Esophagus muscularis mucosa (tissue), 4 donors: ENCODE measurements at regions of chr11 and their contacts with region 1.

Region 1: DNA sequence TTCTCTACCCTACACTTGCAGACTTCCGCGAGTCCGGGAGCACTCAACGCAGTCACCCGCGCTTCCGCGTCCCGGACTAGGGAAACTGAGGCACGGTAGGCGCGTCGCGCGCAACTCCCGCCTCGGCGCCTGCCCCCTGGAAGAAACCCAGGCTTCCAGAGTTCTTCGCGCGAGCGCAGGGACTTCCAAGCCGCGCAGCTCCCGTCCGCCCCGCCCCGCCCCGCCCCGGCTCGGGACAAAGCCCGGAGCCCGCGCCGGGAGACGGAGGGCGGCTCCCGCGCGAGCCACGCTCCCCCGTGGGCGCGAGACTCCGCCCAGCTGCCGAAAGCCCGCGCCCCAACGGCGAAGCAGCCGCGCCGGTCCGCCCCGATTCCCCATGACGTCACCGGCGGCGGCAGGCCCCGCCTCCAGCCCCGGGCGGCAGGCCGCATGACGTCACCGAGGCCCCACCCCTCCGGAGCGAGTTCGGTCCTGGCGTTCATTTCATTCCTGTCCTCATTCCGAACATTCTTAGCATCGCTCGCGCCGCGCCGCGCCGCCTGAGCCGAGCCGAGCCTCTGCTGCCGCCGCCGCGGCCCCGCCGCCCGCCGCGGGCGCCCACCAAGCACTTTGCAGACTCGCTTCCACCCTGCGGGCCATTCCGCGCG is at the start of gene TEAD1:
- DNase-seq: peak; percentile 98
- H3K4me3 ChIP-seq: peak within 1 kb of the TSS; percentile 87 to 92 (median 90)
- H3K27ac ChIP-seq: peak within 1 kb of the TSS; percentile 98 to 100 (median 99)
- H3K4me1 ChIP-seq: peaks cover 21 to 46% (median 36%) of the 10 kb centered on the region in 4 donors
- H3K27me3 ChIP-seq: no peaks in the 10 kb centered on the region
- CTCF ChIP-seq: no peak
- EP300 ChIP-seq: peak; percentile 52
- POLR2A ChIP-seq: peak; percentile 70
- total RNA-seq, gene TEAD1: 147 to 307 (median 232) TPM

Region 2: DNA sequence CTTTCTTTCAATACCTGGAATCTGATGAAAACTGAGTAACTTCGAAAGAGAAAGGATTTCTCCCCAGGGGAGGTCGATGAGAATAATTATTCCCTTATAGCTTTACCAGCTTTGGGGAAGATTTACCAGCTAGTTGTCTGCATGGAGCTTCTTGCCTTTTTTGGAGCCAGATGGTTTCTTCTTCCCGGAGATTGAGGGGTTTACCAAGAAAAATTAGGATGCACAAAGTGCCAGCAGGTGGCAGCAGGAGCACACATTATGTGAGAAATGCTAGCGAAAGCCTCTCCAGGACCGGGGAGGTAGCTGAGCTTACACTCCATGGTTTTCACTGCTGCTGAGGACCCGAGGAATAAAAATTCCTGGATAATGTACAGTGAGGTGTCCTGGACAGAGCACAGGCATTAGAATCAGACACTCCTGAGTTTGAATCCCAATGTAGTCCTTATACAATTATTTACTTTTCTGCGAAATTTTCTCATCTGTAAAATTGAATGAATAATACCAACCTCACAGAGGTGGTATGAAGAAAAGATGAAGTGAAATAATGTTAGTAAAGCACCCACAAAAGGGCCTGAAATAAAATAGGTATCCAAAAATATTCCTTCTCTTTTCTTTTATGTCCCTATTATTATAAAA is 342.7 kb before region 1 on chr11:
- intact Hi-C with region 1: loop called (anchors 10 kb)
- DNase-seq: no peak
- H3K4me3 ChIP-seq: no peak overlapping the region
- H3K27ac ChIP-seq: peak overlapping the region; percentile 44 to 62 (median 54)
- H3K4me1 ChIP-seq: peaks cover 0 to 42% (median 39%) of the 10 kb centered on the region in 4 donors
- H3K27me3 ChIP-seq: no peaks in the 10 kb centered on the region
- CTCF ChIP-seq: peak; percentile 76 to 87 (median 83)
- EP300 ChIP-seq: no peak
- POLR2A ChIP-seq: no peak

Region 3: GRCh38 chr11:12377824-12378593 is 296.0 kb before region 1 on chr11:
- intact Hi-C with region 1: loop called (anchors 5 kb)
- DNase-seq: peak; percentile 92
- H3K4me3 ChIP-seq: peak overlapping the region; percentile 73 to 82 (median 78)
- H3K27ac ChIP-seq: peak overlapping the region; percentile 96 to 100 (median 98)
- H3K4me1 ChIP-seq: peaks cover 36 to 71% (median 67%) of the 10 kb centered on the region in 4 donors
- H3K27me3 ChIP-seq: no peaks in the 10 kb centered on the region
- CTCF ChIP-seq: peak in 2 of 3 experiments; percentile 43 to 53
- EP300 ChIP-seq: peak; percentile 50
- POLR2A ChIP-seq: no peak

Region 4: GRCh38 chr11:12411806-12412727 is 262.0 kb before region 1 on chr11:
- intact Hi-C with region 1: loop called (anchors 10 kb)
- DNase-seq: peak; percentile 92
- H3K4me3 ChIP-seq: no peak overlapping the region
- H3K27ac ChIP-seq: peak overlapping the region; percentile 87 to 100 (median 98)
- H3K4me1 ChIP-seq: peaks cover 77 to 100% (median 99%) of the 10 kb centered on the region in 4 donors
- H3K27me3 ChIP-seq: no peaks in the 10 kb centered on the region
- CTCF ChIP-seq: peak; percentile 73 to 80 (median 80)
- EP300 ChIP-seq: peak; percentile 95
- POLR2A ChIP-seq: no peak

Region 5: DNA sequence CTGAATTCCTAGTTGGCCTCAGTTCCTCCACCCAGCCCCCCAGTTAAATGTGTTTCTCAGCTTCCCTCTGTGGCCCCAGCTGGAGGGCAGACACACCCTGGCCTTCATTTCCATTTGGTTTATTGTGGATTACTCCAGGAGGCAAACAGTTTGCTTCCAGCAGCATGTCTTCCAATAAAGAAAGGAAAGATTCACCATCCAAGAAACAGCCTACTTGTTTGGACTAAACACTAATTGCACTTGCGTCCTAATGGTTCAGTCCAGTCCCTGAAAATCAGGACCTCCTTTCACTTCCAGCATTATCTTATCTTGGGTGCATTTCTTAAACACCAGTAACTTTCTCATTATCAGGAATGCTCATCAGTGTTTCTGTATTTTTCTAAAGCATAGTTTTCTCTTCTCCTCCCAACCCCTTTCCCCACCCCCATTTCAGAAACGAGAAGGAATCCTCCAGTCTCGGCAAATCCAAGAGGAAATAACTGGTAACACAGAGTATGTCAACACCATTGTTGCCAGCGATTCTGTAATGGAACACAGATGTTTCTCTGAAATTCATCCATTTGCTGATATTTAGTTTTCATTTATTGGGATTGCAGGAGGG is 165.8 kb before region 1 on chr11:
- intact Hi-C with region 1: loop called (anchors 10 kb)
- DNase-seq: peak; percentile 75
- H3K4me3 ChIP-seq: no peak overlapping the region
- H3K27ac ChIP-seq: peak overlapping the region; percentile 42 to 55 (median 51)
- H3K4me1 ChIP-seq: peaks cover 7 to 62% (median 44%) of the 10 kb centered on the region in 4 donors
- H3K27me3 ChIP-seq: no peaks in the 10 kb centered on the region
- CTCF ChIP-seq: no peak
- EP300 ChIP-seq: no peak
- POLR2A ChIP-seq: no peak

Region 6: DNA sequence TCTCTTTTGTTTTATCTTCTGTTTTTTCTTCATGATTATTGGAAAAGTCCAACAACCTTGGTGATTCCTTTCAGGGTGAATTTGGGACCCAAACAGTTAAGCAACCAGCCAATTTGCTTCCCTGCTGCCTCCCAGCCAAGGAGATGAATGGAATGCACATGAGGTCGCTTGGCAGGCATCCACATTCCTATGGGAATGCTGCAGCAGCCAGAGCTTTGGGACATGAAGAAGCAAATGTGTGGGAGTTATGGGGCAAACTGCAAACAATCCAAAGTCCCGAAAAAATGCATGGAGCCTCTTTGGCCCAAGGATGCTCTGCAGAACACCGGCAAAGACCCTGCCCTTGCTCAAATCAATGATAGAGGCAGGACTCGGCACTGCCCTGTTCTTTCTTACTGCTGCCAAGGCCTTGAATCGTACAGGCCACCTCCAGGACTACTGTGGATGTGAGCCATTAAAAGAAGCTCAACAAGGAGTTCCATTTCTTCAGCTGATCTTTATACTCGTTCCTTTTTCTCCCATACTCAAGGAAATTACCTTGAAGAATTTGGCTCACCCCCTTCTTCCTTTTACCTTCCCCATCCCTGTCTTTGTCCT is 117.2 kb before region 1 on chr11:
- intact Hi-C with region 1: loop called (anchors 10 kb)
- DNase-seq: peak; percentile 93
- H3K4me3 ChIP-seq: no peak overlapping the region
- H3K27ac ChIP-seq: peak overlapping the region; percentile 69 to 76 (median 76)
- H3K4me1 ChIP-seq: peaks cover 23 to 41% (median 34%) of the 10 kb centered on the region in 4 donors
- H3K27me3 ChIP-seq: no peaks in the 10 kb centered on the region
- CTCF ChIP-seq: no peak
- EP300 ChIP-seq: no peak
- POLR2A ChIP-seq: no peak

Region 7: GRCh38 chr11:12888525-12889158 is 214.6 kb after region 1 on chr11:
- intact Hi-C with region 1: loop called (anchors 2 kb)
- DNase-seq: peak; percentile 95
- H3K4me3 ChIP-seq: no peak overlapping the region
- H3K27ac ChIP-seq: peak overlapping the region; percentile 50 to 80 (median 78)
- H3K4me1 ChIP-seq: peaks cover 26 to 63% (median 50%) of the 10 kb centered on the region in 4 donors
- H3K27me3 ChIP-seq: no peaks in the 10 kb centered on the region
- CTCF ChIP-seq: peak; percentile 61 to 71 (median 71)
- EP300 ChIP-seq: no peak
- POLR2A ChIP-seq: no peak